Heart left ventricle (tissue), 16 donors: ENCODE measurements at regions of chr5 and their contacts with region 1.

Region 1: GRCh38 chr5:40736103-40736875 is 19.5 kb downstream of the TTC33 start:
- DNase-seq: no peak
- ATAC-seq: peak in 3 of 4 donors; percentile 14 to 73 (median 62)
- H3K4me3 ChIP-seq: no peak overlapping the region
- H3K27ac ChIP-seq: no peak overlapping the region
- H3K4me1 ChIP-seq: peaks cover 0 to 34% (median 26%) of the 10 kb centered on the region in 12 donors
- H3K27me3 ChIP-seq: no peaks in the 10 kb centered on the region
- CTCF ChIP-seq: peak; percentile 56 to 88 (median 78)
- POLR2A ChIP-seq: no peak

Region 2: DNA sequence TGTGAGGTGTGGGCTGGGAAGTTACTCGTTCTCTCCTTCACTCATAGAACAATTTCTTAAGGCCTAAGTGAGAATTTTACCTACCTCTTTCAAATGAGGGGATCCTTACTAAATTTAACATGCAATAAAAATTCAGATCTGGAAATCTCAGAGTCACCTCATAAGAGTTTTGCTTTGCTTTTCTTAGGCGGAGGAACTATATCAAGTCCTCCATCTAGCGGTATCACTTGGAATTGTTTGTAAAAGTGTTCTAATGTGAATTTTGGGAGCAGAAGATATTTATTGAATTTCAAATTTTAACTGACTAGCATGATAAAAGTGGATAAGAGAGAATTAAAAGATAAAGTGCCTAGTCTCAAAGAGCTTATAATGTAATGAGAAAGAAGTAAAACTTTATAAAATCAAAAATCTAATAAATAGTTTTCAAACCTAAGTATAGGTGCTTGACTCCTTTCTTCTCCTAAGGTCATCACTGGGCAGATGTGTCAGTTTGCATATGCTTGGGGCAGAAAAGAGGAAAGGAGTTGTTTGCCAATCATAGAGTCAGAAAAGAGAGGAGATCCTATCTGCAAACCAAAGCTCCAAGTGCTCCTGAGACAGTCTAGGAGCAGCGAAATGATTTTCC is 1165.8 kb before region 1 on chr5:
- intact Hi-C with region 1: loop called in 3 of 10 experiments (anchors 5 to 10 kb)
- DNase-seq: no peak
- ATAC-seq: no peak
- H3K4me3 ChIP-seq: no peak overlapping the region
- H3K27ac ChIP-seq: no peak overlapping the region
- H3K4me1 ChIP-seq: peaks cover 0 to 8% (median 0%) of the 10 kb centered on the region in 12 donors
- H3K27me3 ChIP-seq: peaks cover 0 to 8% (median 0%) of the 10 kb centered on the region in 9 donors
- CTCF ChIP-seq: peak; percentile 46 to 80 (median 67)
- POLR2A ChIP-seq: no peak

Region 3: DNA sequence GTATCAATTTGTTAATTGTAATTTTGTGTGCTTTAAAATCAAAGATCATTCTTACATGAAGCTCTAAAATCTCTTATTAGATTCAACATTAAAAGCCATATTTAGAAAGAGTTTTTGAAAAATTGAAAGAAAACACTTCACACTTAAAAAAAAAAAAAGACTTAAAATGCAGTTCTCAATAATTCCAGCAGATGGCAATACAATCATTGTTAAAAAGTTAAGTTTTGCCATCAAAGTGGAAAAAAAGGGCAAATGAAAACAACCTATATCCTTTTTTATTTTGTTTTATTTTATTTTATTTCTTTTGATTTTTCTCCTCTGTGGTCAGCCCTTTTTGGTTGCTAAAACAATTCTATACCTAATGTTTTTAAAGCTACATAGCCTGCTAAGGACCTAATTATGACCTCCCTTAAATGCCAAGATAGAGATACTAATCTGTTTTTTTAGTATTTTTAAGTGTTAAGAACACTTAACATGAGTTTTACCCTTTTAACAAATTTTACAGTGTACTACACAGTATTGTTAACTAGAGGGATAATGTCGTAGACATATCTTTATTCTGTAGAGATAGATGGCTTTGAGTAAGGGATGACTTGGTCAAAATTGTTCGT is 1157.3 kb before region 1 on chr5:
- intact Hi-C with region 1: loop called in 5 of 10 experiments (anchors 2 to 10 kb)
- DNase-seq: no peak
- ATAC-seq: no peak
- H3K4me3 ChIP-seq: no peak overlapping the region
- H3K27ac ChIP-seq: no peak overlapping the region
- H3K4me1 ChIP-seq: peaks cover 0 to 22% (median 0%) of the 10 kb centered on the region in 12 donors
- H3K27me3 ChIP-seq: no peaks in the 10 kb centered on the region
- CTCF ChIP-seq: peak; percentile 60 to 84 (median 70)
- POLR2A ChIP-seq: no peak

Region 4: DNA sequence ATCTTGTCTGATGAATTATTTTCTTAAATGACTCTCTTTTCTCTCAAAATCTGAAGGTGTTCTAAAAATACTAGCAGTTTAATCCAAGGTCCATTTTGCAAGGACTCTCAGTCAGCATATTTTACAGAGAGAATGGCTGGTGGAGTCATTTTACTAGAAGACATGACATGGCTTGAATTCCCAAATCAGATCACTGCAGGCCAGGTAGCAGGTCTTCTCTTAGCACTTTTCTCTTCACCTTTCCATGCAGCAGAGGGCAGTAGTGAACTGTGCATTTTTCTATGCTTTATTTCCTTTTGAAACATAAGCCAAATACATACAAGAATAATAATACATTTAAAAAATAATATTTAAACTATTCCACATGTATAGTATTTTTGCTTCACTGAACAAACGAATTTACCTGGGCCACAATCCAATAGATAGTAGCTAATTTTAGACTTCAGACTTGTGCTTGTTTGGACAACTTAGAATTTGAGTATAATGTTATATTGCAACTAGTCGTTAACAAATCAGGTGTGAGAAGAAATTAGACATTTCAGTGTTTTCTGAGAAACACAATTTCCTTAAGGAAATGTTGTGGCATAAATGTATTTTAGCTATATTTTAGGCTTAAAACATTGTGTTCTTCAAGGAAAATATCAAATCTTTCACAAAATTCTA is 1022.1 kb before region 1 on chr5:
- intact Hi-C with region 1: loop called in 4 of 10 experiments (anchors 2 to 10 kb)
- DNase-seq: peak in 1 of 5 donors; percentile 14
- ATAC-seq: peak in 1 of 4 donors; percentile 53
- H3K4me3 ChIP-seq: no peak overlapping the region
- H3K27ac ChIP-seq: peak overlapping the region in 2 of 12 donors; percentile 6 to 25
- H3K4me1 ChIP-seq: peaks cover 0 to 8% (median 0%) of the 10 kb centered on the region in 12 donors
- H3K27me3 ChIP-seq: no peaks in the 10 kb centered on the region
- CTCF ChIP-seq: peak; percentile 35 to 67 (median 56)
- POLR2A ChIP-seq: no peak

Region 5: DNA sequence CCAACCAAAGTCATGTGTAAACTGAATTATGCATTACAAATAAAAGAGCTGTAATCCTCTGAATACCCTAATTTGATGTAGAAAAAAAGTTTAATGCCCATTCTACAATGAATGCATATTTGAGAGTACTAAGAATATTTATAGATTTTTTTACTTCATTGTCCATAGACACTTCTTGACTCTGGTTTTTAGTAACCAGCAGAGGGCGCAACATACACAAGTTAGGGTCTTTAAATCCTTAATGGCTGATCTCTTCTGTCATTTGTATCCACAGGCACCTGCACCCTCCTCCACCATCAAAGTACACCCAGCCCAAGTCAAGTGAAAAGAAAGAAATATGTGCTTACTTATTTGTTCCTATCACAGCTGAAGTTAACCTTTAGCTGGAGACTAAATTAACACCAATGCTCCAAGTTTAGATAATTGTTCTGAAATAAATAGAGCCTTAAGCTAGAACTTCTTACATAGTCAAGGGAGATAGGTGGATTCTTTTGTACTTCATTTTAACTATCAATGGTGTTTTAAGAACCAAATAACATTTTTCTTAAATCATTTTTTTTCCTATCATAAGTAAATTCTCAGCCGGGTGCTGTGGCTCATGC is 787.3 kb before region 1 on chr5:
- intact Hi-C with region 1: loop called (anchors 2 to 10 kb)
- DNase-seq: peak in 4 of 5 donors; percentile 31 to 54 (median 46)
- ATAC-seq: peak in 3 of 4 donors; percentile 45 to 78 (median 73)
- H3K4me3 ChIP-seq: no peak overlapping the region
- H3K27ac ChIP-seq: no peak overlapping the region
- H3K4me1 ChIP-seq: peaks cover 0 to 10% (median 0%) of the 10 kb centered on the region in 12 donors
- H3K27me3 ChIP-seq: no peaks in the 10 kb centered on the region
- CTCF ChIP-seq: peak; percentile 43 to 83 (median 71)
- POLR2A ChIP-seq: no peak

Region 6: GRCh38 chr5:40518511-40518967 is 217.8 kb before region 1 on chr5:
- intact Hi-C with region 1: no loop called
- DNase-seq: no peak
- ATAC-seq: no peak
- H3K4me3 ChIP-seq: no peak overlapping the region
- H3K27ac ChIP-seq: no peak overlapping the region
- H3K4me1 ChIP-seq: peaks cover 0 to 24% (median 0%) of the 10 kb centered on the region in 12 donors
- H3K27me3 ChIP-seq: no peaks in the 10 kb centered on the region
- CTCF ChIP-seq: no peak
- POLR2A ChIP-seq: no peak

Region 7: DNA sequence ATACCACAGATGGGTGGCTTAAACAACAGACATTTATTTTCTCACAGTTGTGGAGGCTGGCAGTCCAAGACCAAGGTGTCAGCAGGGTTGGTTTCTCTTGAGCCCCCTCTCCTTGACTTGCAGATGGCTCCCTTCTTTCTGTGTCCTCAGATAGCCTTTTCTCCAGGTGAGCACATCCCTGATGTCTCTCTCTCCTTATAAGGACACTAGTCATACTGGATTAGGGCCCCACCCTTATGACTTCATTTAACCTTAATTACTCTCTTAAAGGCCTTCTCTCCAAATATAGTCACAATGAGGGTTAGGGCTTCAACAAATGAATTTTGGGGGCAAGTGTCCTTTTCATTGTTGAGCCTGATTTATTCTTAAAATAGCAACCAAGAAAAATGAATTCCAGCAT is 41.9 kb before region 1 on chr5:
- intact Hi-C with region 1: loop called in 3 of 10 experiments (anchors 2 to 5 kb)
- DNase-seq: no peak
- ATAC-seq: no peak
- H3K4me3 ChIP-seq: no peak overlapping the region
- H3K27ac ChIP-seq: no peak overlapping the region
- H3K4me1 ChIP-seq: peaks cover 0 to 15% (median 8%) of the 10 kb centered on the region in 12 donors
- H3K27me3 ChIP-seq: no peaks in the 10 kb centered on the region
- CTCF ChIP-seq: no peak
- POLR2A ChIP-seq: no peak

Region 8: GRCh38 chr5:40991168-40991980 is 255.1 kb after region 1 on chr5:
- intact Hi-C with region 1: no loop called
- DNase-seq: peak in 4 of 5 donors; percentile 46 to 67 (median 53)
- ATAC-seq: peak; percentile 83 to 96 (median 94)
- H3K4me3 ChIP-seq: no peak overlapping the region
- H3K27ac ChIP-seq: peak overlapping the region; percentile 32 to 82 (median 70)
- H3K4me1 ChIP-seq: peaks cover 0 to 25% (median 11%) of the 10 kb centered on the region in 12 donors
- H3K27me3 ChIP-seq: no peaks in the 10 kb centered on the region
- CTCF ChIP-seq: peak in 1 of 12 donors; percentile 17
- POLR2A ChIP-seq: no peak